H1 (cell line): ENCODE measurements at regions of chr13 and their contacts with region 1.

Region 1: GRCh38 chr13:88051746-88052482 is 380.7 kb downstream of the SLITRK5 start:
- DNase-seq: no peak
- H3K4me3 ChIP-seq: no peak overlapping the region
- H3K27ac ChIP-seq: no peak overlapping the region
- H3K4me1 ChIP-seq: no peaks in the 10 kb centered on the region
- H3K27me3 ChIP-seq: no peaks in the 10 kb centered on the region
- CTCF ChIP-seq: no peak
- EP300 ChIP-seq: no peak
- POLR2A ChIP-seq: no peak
- RAD21 ChIP-seq: no peak

Region 2: DNA sequence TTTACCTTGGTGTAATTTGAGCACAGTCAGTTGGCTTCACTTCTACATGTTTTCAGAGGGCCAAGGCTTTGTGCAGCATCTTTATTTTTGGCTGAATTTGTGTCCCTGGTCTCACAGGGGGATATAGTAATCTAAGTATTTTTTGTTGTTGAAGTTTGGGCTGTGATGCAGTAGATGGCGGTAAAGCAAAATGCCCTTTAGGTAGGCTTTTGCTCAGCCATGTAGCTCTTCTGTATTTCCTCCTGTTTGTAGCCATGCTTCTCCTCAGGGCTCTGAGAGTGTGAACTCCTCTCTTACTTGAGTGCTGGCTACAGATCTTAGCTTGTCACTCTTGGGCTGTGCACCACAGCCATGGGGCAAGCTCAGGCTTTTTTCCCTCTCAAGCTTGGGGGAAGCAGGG is 52.1 kb before region 1 on chr13:
- CTCF ChIA-PET with region 1: interaction called, 10 read pairs
- POLR2A ChIA-PET with region 1: no interaction called
- DNase-seq: no peak
- H3K4me3 ChIP-seq: no peak overlapping the region
- H3K27ac ChIP-seq: no peak overlapping the region
- H3K4me1 ChIP-seq: no peaks in the 10 kb centered on the region
- H3K27me3 ChIP-seq: no peaks in the 10 kb centered on the region
- CTCF ChIP-seq: peak in 2 of 3 experiments; percentile 17 to 39; a peak in 2 of 4 replicates
- EP300 ChIP-seq: no peak
- POLR2A ChIP-seq: no peak
- RAD21 ChIP-seq: peak; percentile 43 to 51

Region 3: GRCh38 chr13:88068975-88069374 is 17.1 kb after region 1 on chr13:
- CTCF ChIA-PET with region 1: interaction called, 10 read pairs
- POLR2A ChIA-PET with region 1: no interaction called
- DNase-seq: peak; percentile 41 to 72
- H3K4me3 ChIP-seq: no peak overlapping the region
- H3K27ac ChIP-seq: no peak overlapping the region
- H3K4me1 ChIP-seq: no peaks in the 10 kb centered on the region
- H3K27me3 ChIP-seq: no peaks in the 10 kb centered on the region
- CTCF ChIP-seq: peak; percentile 56 to 70 (median 61)
- EP300 ChIP-seq: no peak
- POLR2A ChIP-seq: no peak
- RAD21 ChIP-seq: peak; percentile 75